HAP-1 (cell line): ENCODE measurements at regions of chr5 and their contacts with region 1.

Region 1: GRCh38 chr5:151825445-151825844 is 53.7 kb downstream of the G3BP1 start:
- DNase-seq: peak; percentile 36 to 75
- H3K4me3 ChIP-seq: no peak overlapping the region
- H3K4me1 ChIP-seq: no peaks in the 10 kb centered on the region
- H3K27me3 ChIP-seq: no peaks in the 10 kb centered on the region

Region 2: DNA sequence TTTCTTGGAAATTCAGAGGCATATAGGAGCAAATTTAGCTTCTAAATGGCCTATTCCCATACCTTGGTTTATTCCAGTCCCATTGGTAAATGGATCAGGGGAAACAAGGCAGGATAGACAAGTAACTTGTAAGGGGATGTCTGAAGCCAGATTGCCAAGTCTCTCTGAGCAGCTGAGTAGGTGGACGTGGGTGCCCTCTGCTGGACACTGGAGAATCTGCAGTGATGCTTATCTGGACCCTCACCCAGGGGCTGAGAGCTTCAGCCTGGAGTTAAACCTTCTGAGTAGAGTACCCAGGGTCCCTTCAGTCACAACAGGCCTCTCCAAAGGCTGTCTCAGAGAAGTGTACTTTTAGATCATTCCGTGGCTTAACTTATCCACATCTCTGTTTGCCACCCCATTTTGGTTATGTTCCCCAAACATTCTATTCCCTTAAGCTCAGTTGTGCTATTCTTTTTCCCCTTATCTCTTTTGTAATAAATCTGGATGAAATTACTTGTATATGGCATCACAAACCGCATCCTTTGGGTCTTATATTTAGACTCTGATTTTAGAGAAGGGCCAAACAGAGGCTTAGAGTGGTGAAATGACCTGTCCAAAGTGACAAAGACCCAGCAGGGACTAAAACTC is 317.5 kb after region 1 on chr5:
- in situ Hi-C with region 1: loop called (anchors 10 kb)
- DNase-seq: peak; percentile 35 to 74
- H3K4me3 ChIP-seq: no peak overlapping the region
- H3K4me1 ChIP-seq: no peaks in the 10 kb centered on the region
- H3K27me3 ChIP-seq: no peaks in the 10 kb centered on the region